ENCODE measurements at regions of chr11 and their contacts with region 1.

Region 1: GRCh38 chr11:12274558-12275197 is 102.7 kb upstream of the PARVA start:
- DNase-seq: peak in 1 of 2 donors; percentile 25
- ATAC-seq: no peak
- H3K4me3 ChIP-seq: no peak overlapping the region
- H3K27ac ChIP-seq: no peak overlapping the region
- H3K4me1 ChIP-seq: no peaks in the 10 kb centered on the region
- H3K27me3 ChIP-seq: no peaks in the 10 kb centered on the region

Region 2: GRCh38 chr11:11931461-11932055 is 343.1 kb before region 1 on chr11:
- intact Hi-C with region 1: loop called in 1 of 2 experiments (anchors 10 kb)
- DNase-seq: no peak
- ATAC-seq: no peak
- H3K4me3 ChIP-seq: no peak overlapping the region
- H3K27ac ChIP-seq: no peak overlapping the region
- H3K4me1 ChIP-seq: no peaks in the 10 kb centered on the region
- H3K27me3 ChIP-seq: no peaks in the 10 kb centered on the region

Region 3: GRCh38 chr11:12356944-12357650 is 82.4 kb after region 1 on chr11:
- intact Hi-C with region 1: no loop called
- DNase-seq: no peak
- ATAC-seq: no peak
- H3K4me3 ChIP-seq: no peak overlapping the region
- H3K27ac ChIP-seq: no peak overlapping the region
- H3K4me1 ChIP-seq: no peaks in the 10 kb centered on the region
- H3K27me3 ChIP-seq: no peaks in the 10 kb centered on the region

Region 4: DNA sequence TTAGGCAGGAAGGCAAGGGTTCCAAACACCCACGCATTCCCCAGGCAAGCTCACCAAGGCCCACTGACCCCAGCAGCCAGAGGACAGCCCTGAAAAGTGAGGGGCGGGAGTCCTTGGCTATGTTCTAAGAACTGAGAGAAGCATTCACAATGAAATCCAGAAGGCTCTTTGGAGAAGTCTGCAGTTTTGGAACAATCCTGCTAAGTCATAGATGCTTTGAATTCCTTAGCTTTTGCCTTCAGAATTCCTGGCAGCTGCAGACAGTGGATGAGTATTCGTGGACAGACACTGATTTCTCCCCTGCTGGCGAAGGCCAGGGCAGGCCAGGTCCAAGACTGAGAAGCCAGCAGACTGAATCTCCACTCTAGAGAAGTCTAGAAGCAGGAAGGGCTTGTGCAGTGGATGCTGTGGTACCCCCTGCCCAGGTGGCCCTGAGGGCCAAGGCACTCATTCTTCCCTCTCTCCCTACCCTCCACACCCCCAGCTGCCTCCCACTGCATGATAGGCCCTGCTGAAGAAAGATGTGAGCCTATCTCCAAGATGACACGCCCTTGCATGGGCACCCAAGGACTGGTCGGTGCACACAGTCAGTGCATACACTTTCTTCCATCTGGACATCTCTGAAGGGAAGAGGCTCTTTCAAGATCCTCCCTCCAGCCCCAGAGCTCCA is 266.4 kb after region 1 on chr11:
- intact Hi-C with region 1: no loop called
- DNase-seq: no peak
- ATAC-seq: peak; percentile 21
- H3K4me3 ChIP-seq: no peak overlapping the region
- H3K27ac ChIP-seq: peak overlapping the region in 1 of 2 donors; percentile 37
- H3K4me1 ChIP-seq: peaks cover 0 to 4% of the 10 kb centered on the region in 2 donors
- H3K27me3 ChIP-seq: no peaks in the 10 kb centered on the region